ENCODE measurements at regions of chr9 and their contacts with region 1.

Region 1: GRCh38 chr9:20950707-20951106 is 80.7 kb downstream of the HACD4 start:
- DNase-seq: no peak
- ATAC-seq: no peak
- H3K4me3 ChIP-seq: no peak overlapping the region
- H3K27ac ChIP-seq: no peak overlapping the region
- H3K4me1 ChIP-seq: peaks cover 3 to 8% of the 10 kb centered on the region in 2 donors
- H3K27me3 ChIP-seq: no peaks in the 10 kb centered on the region

Region 2: GRCh38 chr9:20972684-20973083 is 22.0 kb after region 1 on chr9:
- intact Hi-C with region 1: loop called in 1 of 2 experiments (anchors 2 kb)
- DNase-seq: no peak
- ATAC-seq: no peak
- H3K4me3 ChIP-seq: no peak overlapping the region
- H3K27ac ChIP-seq: no peak overlapping the region
- H3K4me1 ChIP-seq: no peaks in the 10 kb centered on the region
- H3K27me3 ChIP-seq: no peaks in the 10 kb centered on the region

Region 3: DNA sequence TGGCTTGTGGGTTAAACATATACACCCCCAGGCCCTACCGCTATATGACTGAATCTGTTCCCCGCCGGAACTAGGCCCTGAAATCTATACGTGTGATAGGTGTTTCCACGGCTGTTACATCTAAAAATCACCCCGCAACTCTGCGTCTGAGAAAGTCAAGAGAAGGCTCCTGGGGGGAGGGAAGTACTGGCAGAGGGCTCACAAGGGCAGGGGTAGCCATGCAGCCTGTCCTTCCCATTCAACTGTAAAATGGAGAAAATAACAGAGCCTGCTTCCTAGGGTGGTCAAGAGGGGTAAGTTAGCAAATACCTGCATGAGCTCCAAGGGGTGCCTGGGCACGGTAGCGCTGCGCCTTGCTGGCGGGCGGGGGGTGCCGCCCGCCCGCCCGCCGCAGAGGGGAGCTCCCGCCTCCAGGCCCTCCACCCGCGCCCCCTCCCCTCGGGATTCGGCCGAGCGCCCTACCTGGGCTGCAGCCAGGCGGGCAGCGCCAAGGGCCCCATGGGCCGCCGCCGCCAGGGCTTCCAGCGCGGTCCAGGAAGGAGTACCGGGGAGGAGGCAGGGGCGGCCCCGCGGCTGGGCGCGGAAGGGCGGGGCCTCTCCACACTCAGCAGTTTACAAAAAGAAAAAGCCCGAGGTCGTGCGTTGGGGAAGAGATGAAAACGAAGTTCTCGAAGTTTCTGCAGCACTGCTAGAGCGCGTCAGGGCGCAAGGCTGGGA is 80.5 kb after region 1 on chr9 and contains the start of gene HACD4:
- intact Hi-C with region 1: no loop called
- DNase-seq: peak; percentile 80 to 85
- ATAC-seq: peak; percentile 91
- H3K4me3 ChIP-seq: peak within 1 kb of the TSS; percentile 15 to 21
- H3K27ac ChIP-seq: peak within 1 kb of the TSS; percentile 20 to 59
- H3K4me1 ChIP-seq: no peaks in the 10 kb centered on the region
- H3K27me3 ChIP-seq: no peaks in the 10 kb centered on the region
- total RNA-seq, gene HACD4: 3.2 to 6.8 TPM

Measured in aorta (tissue), 5 donors.